Head of caudate nucleus (tissue), 42 donors: ENCODE measurements at regions of chr15 and their contacts with region 1.

Region 1: GRCh38 chr15:74768771-74769342 is 13.0 kb upstream of the CSK start:
- DNase-seq: peak; percentile 59 to 89 (median 76)

Region 2: DNA sequence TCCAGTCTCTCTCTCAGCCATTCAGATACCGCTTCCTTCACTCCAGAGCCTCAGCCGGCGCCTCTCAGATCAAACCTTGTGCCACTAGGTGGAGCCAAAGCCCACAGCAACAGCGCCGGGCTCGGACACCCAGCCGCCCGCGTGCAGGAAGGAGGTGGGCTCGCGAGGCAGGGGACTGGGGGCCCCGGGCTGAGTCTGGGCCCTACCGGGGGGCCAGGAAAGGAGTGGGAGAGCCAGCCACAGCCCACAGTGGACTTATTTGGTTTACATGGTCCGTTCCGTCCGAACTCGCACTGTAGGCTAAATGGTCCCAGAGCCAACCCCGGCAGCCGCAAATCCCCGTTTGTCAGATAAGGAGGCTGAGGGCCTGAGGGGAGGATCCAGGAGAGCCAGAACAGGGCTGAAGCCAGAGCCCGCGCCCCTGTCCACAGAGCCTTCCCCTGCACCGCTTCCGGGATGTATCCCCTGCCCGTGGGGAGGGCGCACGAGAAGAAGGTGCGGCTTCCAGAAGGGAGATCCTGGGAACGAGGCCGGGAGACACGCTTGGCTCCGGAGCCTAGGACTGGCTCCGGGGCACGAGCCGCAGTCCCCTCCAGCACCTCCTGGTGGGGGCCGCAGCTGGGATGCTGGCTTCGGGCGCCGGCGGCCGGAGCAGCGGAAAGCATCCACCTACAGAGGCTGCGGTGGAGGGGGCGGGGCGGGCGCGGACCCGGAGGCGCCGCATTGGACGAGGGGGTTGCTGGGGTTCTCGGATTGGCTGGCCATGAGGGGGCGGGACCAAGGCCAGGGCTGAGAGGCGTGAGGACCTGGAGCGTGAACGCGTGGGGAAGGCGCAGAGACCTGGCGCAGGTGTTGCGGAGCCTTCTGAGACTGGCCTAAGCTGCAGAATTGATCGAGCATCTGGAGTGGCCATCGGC is 394.9 kb before region 1 on chr15:
- intact Hi-C with region 1: loop called (anchors 5 kb)
- DNase-seq: peak; percentile 83 to 96 (median 91)

Region 3: DNA sequence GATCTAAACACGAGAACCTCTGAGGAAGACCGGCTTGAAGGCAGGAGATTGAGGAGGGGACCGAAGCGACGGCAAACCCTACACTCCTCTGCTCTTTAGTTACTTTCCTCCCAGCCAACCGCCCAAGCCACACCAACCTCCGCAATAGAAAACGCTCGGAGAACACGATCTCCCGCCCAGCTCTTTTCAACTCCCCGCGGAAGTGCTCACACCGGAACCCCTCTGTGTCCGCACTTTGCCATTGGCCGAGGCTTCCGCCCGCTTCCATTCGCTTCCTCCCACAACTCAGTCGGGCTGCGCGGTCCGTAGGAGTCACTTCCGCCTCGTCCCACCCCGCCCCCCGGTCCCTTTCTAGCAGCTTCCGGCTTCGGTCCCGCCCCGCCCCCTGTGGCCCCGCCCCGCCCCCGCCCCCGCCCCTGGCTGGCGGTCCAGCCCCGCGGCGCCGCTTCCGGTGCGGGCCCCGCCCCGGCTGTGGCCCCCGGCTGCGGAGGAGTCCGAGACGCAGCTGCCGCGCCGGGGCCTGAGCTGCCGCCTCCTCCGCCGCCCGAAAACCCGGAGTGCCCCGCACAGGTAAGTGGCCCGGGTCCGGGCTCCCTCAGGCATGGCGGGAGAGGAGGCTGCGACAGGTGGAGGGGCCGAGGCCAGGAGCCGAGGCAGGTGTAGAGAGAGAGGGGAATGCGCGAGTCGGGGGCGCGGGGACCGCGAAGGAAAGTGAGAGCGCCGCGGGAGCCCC is 227.9 kb before region 1 on chr15 and contains the start of gene ARID3B:
- intact Hi-C with region 1: no loop called
- DNase-seq: peak; percentile 92 to 99 (median 96)